PC-3 (cell line): ENCODE measurements at regions of chr3 and their contacts with region 1.

Region 1: GRCh38 chr3:149120051-149120972 is 9.1 kb upstream of the HPS3 start:
- DNase-seq: peak; percentile 86
- ATAC-seq: peak; percentile 82
- H3K4me3 ChIP-seq: no peak overlapping the region
- H3K27ac ChIP-seq: no peak overlapping the region
- H3K4me1 ChIP-seq: 0 out of 2 replicates have a peak, but pooled peaks cover 4% of the 10 kb centered on the region
- H3K27me3 ChIP-seq: no peaks in the 10 kb centered on the region
- CTCF ChIP-seq: peak; percentile 83

Region 2: DNA sequence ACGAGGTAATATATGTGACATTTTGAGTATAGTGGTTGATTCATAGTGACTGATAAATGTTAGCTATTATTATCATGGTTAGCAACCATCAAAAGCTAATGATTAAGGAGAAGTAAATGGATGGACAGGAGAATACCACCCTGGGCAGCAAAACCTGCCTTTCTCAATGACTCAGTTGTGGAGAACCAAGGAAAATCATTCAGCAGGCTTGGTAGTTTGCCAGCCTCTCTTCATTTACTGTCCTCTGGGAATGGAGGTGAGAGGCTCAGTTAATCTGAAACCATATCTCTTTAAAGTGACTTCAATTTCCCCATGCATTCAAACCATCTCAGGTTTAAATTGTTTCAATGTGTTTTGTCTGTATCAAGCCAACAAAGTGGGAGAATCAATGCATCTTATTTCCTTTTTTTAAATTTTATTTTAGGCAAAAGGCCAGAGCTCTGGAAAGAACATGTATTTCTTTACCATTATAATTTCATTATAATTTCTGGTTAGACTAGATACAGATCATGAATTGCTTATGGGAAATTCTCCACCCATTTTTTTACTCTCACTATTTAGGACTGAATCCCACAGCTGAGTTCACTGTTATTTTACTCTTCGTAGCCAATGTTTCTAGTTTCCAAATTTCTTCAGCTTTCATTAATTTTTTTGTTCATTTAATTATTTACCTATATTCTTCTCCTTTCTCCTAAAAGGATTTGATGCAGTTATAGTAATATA is 210.5 kb after region 1 on chr3:
- CTCF ChIA-PET with region 1: interaction called, 7 read pairs
- POLR2A ChIA-PET with region 1: no interaction called
- intact Hi-C with region 1: loop called (anchors 1 kb)
- DNase-seq: peak; percentile 79
- ATAC-seq: peak; percentile 36; the same call in 1 of the 2 replicates
- H3K4me3 ChIP-seq: no peak overlapping the region
- H3K27ac ChIP-seq: peak overlapping the region; percentile 6; the same call in 1 of the 2 replicates
- H3K4me1 ChIP-seq: peaks cover 41% of the 10 kb centered on the region
- H3K27me3 ChIP-seq: no peaks in the 10 kb centered on the region
- CTCF ChIP-seq: no peak

Region 3: DNA sequence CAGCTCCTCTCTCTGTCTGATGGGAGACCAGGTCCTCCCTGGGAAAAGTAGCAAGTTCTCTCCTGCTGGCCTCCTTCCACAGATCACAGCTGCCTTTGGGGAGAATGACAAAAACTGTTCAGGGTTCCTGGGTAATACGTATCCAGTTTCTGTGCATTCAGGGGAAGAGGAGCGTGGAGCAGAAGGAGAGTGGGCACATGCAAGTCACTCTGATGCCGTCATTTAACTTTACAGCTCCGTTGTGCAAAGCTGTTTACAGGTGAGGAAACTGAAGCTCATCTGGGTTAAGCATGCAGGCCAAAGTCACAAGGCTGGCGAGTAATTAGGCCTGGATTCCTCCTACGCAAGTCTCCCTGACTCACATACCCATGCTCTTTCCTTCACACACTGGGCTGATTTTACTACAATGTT is 264.6 kb after region 1 on chr3:
- CTCF ChIA-PET with region 1: no interaction called
- POLR2A ChIA-PET with region 1: no interaction called
- intact Hi-C with region 1: loop called (anchors 5 kb)
- DNase-seq: peak; percentile 47
- ATAC-seq: no peak
- H3K4me3 ChIP-seq: no peak overlapping the region
- H3K27ac ChIP-seq: peak overlapping the region; percentile 99
- H3K4me1 ChIP-seq: peaks cover 77% of the 10 kb centered on the region
- H3K27me3 ChIP-seq: no peaks in the 10 kb centered on the region
- CTCF ChIP-seq: no peak

Region 4: GRCh38 chr3:149480325-149481017 is 360.2 kb after region 1 on chr3:
- CTCF ChIA-PET with region 1: no interaction called
- POLR2A ChIA-PET with region 1: no interaction called
- intact Hi-C with region 1: loop called (anchors 2 kb)
- DNase-seq: peak; percentile 94
- ATAC-seq: peak; percentile 96
- H3K4me3 ChIP-seq: no peak overlapping the region
- H3K27ac ChIP-seq: peak overlapping the region; percentile 55
- H3K4me1 ChIP-seq: peaks cover 17% of the 10 kb centered on the region
- H3K27me3 ChIP-seq: no peaks in the 10 kb centered on the region
- CTCF ChIP-seq: peak; percentile 98